ENCODE measurements at regions of chr17 and their contacts with region 1.

Region 1: GRCh38 chr17:47802341-47803022 is 19.1 kb downstream of the OSBPL7 start:
- DNase-seq: peak; percentile 90
- H3K4me3 ChIP-seq: no peak overlapping the region
- H3K27ac ChIP-seq: no peak overlapping the region
- H3K4me1 ChIP-seq: no peaks in the 10 kb centered on the region
- H3K27me3 ChIP-seq: 0 out of 2 replicates have a peak, but pooled peaks cover 14% of the 10 kb centered on the region
- CTCF ChIP-seq: peak; percentile 78
- EP300 ChIP-seq: no peak
- RAD21 ChIP-seq: peak; percentile 90

Region 2: GRCh38 chr17:47675380-47676198 is 126.9 kb before region 1 on chr17:
- CTCF ChIA-PET with region 1: interaction called, 10 read pairs
- POLR2A ChIA-PET with region 1: no interaction called
- DNase-seq: no peak
- H3K4me3 ChIP-seq: no peak overlapping the region
- H3K27ac ChIP-seq: no peak overlapping the region
- H3K4me1 ChIP-seq: no peaks in the 10 kb centered on the region
- H3K27me3 ChIP-seq: no peaks in the 10 kb centered on the region
- CTCF ChIP-seq: no peak
- EP300 ChIP-seq: no peak
- RAD21 ChIP-seq: no peak

Region 3: DNA sequence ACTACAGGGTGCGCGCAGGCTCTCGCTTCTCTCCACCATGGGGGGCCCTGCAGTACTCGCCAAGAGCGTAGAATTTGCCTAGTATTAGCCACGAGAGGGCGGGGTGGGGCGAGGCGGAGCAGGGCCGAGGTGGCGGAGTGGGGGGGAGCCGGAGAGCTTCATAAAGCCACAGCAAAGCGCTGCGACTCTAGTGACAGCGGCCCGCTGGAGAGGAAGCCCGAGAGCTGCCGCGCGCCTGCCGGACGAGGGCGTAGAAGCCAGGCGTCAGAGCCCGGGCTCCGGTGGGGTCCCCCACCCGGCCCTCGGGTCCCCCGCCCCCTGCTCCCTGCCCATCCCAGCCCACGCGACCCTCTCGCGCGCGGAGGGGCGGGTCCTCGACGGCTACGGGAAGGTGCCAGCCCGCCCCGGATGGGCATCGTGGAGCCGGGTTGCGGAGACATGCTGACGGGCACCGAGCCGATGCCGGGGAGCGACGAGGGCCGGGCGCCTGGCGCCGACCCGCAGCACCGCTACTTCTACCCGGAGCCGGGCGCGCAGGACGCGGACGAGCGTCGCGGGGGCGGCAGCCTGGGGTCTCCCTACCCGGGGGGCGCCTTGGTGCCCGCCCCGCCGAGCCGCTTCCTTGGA is 69.3 kb before region 1 on chr17 and contains the start of gene TBX21:
- CTCF ChIA-PET with region 1: interaction called, 10 read pairs
- POLR2A ChIA-PET with region 1: no interaction called
- DNase-seq: peak; percentile 93
- H3K4me3 ChIP-seq: peak within 1 kb of the TSS; percentile 25 to 31; a peak in 3 of 4 replicates
- H3K27ac ChIP-seq: no peak within 1 kb of the TSS
- H3K4me1 ChIP-seq: peaks cover 0 to 10% of the 10 kb centered on the region in 2 experiments; a peak in 1 of 4 replicates
- H3K27me3 ChIP-seq: peaks cover 87% of the 10 kb centered on the region
- CTCF ChIP-seq: peak; percentile 40
- EP300 ChIP-seq: no peak
- RAD21 ChIP-seq: 0 out of 2 replicates have a peak, but pooled peaks have one; percentile 16
- polyA plus RNA-seq, gene TBX21: not detected in 2 replicates

Region 4: DNA sequence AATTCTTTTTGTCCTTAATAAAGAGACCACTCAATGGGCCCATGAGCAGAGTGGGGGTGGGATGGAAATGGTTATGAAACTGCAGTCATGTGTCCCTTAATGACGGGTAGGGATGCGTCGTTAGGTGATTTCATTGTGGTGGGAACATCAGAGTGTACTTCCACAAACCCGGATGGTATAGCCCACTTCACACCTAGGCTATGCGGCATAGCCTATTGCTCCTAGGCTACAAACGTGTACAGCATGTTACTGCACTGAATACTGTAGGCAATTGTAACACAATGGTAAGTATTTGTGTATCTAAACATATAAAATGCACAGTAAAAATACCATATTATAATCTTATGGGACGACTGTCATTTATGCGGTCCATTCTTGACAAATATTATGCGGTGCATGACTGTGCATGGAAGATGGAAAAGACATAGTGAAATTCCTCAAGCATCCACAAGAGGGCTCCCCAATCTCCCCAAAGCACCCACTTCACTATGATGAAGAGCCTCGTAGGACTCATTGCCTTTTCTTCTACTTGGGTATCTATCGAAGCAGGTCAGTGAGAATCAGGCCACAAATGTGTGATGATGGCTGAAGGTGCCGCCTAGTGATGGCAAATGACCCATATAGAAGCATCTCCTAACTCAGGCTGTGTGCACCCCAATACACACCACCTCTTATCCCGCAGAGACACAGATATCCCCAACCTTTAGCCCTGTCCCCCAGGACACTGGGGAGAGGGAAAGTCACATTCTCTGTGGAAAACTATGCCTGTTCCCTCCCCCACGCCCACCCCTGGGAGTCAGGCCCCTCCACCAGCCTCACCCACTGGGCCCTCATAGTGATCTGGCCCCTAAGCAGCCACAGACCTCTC is 25.9 kb before region 1 on chr17:
- CTCF ChIA-PET with region 1: interaction called, 88 read pairs
- POLR2A ChIA-PET with region 1: no interaction called
- DNase-seq: peak; percentile 81
- H3K4me3 ChIP-seq: no peak overlapping the region; a peak in 1 of 4 replicates
- H3K27ac ChIP-seq: no peak overlapping the region
- H3K4me1 ChIP-seq: peaks cover 0 to 4% of the 10 kb centered on the region in 2 experiments; a peak in 1 of 4 replicates
- H3K27me3 ChIP-seq: peaks cover 73% of the 10 kb centered on the region
- CTCF ChIP-seq: peak; percentile 78
- EP300 ChIP-seq: no peak
- RAD21 ChIP-seq: peak; percentile 76

Region 5: GRCh38 chr17:47821424-47822391 is 19.2 kb after region 1 on chr17 and contains the start of gene OSBPL7:
- CTCF ChIA-PET with region 1: interaction called, 20 read pairs
- POLR2A ChIA-PET with region 1: interaction called, 3 read pairs
- DNase-seq: peak; percentile 99
- H3K4me3 ChIP-seq: peak within 1 kb of the TSS; percentile 90 to 93
- H3K27ac ChIP-seq: peak within 1 kb of the TSS; percentile 37 to 88
- H3K4me1 ChIP-seq: peaks cover 11 to 26% of the 10 kb centered on the region in 2 experiments; a peak in 3 of 4 replicates
- H3K27me3 ChIP-seq: no peaks in the 10 kb centered on the region
- CTCF ChIP-seq: peak; percentile 57
- EP300 ChIP-seq: no peak
- RAD21 ChIP-seq: peak; percentile 15; the same call in 1 of the 2 replicates
- polyA plus RNA-seq, gene OSBPL7: 23.7 and 24.7 TPM in 2 replicates

Region 6: DNA sequence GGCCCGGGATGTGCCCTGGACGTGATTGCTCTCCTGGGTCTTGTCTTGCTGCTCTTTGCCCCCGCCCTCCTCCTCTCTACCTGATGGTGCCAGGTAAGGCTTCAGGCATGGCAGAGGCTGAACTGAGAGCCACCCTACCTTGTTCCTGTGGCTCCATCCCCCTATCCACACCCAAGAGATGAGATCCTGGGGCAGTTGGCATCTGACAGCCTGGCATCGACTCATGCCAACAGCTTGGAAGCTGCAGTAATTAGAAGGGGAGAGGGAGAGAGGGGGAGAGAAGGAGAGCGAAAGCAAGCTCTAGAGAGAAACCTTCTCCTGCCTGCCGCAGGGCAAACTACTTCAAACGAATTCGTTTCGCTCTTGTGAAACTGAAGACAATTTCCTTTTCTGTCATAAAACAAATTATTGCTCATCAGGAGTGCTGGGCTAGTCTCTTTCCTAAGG is 62.3 kb after region 1 on chr17:
- CTCF ChIA-PET with region 1: no interaction called
- POLR2A ChIA-PET with region 1: no interaction called
- DNase-seq: no peak
- H3K4me3 ChIP-seq: no peak overlapping the region
- H3K27ac ChIP-seq: no peak overlapping the region
- H3K4me1 ChIP-seq: peaks cover 0 to 5% of the 10 kb centered on the region in 2 experiments; a peak in 1 of 4 replicates
- H3K27me3 ChIP-seq: peaks cover 16% of the 10 kb centered on the region
- CTCF ChIP-seq: no peak
- EP300 ChIP-seq: no peak
- RAD21 ChIP-seq: no peak

Region 7: DNA sequence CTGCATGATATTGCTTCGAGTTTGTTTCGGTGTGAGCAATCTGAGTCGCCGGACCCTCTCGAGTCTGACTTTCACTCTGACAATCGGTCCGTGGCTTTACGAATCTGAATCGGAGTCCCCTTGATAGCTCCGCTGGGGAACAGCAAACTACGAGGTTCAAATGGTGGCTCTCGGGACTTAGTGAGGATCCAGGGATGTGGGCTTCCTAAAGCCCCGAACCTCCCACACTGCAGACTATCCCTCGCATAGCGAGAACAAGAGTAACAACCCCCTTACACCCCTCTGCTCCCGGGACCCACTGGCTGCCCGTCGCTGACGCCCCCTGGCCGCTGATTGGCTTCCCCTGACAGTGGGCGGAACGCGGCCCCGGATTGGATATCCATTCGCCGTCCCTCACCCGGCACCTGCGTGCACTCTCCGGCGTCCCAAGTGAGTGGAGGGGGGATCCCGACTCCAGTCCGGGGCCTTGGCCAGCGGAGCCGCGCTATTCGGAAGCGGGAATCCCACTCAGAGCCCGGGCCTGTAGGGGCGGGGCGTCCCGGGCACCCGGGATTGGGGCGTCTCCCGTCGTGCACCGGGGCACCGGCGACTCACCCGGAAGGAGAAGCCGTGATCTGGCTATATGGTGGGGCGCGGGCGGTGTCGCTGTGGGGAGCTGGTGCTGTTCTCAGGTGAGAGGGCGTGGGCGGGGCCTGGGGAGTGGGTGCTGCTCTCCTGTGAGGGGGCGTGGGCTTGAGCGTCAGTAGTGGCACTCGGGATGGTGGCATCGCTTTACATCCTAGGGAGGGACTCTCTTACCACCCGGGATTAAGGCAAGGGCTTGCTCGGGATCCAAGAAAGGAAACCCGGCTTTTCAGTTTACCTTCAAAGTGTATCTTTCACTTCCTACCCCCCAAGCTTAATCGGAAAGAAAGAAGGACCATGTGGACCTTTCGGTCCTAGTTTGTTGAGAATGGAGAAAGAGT is 305.0 kb after region 1 on chr17 and contains the start of gene SNX11:
- CTCF ChIA-PET with region 1: no interaction called
- POLR2A ChIA-PET with region 1: no interaction called
- DNase-seq: peak; percentile 98
- H3K4me3 ChIP-seq: peak within 1 kb of the TSS; percentile 70 to 89
- H3K27ac ChIP-seq: peak within 1 kb of the TSS; percentile 76 to 92
- H3K4me1 ChIP-seq: peaks cover 4 to 7% of the 10 kb centered on the region in 2 experiments; a peak in 3 of 4 replicates
- H3K27me3 ChIP-seq: no peaks in the 10 kb centered on the region
- CTCF ChIP-seq: peak; percentile 21; the same call in 1 of the 2 replicates
- EP300 ChIP-seq: no peak
- RAD21 ChIP-seq: no peak
- polyA plus RNA-seq, gene SNX11: 19.0 and 31.6 TPM in 2 replicates

Measured in SK-N-SH (cell line).